ENCODE measurements at regions of chr18 and their contacts with region 1.

Region 1: DNA sequence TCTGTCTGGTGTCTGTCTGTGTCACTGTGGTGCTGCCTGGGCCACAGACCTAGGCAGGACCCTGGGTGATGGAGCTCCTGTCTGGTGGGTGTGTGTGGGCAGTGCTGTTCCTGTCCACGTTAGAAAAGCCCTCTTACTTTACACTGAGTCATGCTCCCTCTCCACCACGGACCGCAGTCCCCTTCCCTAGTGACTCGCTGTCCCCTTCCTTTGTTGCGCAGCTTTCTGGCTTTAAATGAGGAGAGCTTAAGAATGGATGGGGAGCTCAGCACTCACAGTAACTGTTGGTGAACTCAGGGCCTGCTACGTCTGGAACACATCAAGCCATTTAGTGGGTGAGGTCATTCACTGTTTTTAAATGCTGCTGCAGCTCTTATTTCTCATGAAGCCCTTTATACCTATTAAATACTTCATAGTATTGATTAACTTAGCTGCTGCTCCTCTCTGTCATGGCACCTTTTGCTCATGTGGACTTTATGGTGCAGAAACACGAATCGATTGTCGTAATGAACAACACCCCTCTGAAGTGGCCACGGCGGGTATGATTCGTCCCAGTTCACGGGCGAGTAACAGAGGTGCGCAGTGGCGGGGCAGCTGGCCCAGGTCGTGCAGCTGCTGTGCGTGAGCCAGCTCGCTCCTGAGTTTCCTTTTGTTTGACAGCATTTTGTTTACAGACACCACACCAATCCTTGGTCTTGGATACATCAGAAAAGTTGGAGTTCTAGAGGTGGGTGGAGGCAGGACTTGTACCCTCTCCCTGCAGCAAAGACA is 100.4 kb downstream of the LDLRAD4 start:
- DNase-seq: no peak
- H3K4me3 ChIP-seq: no peak overlapping the region
- H3K27ac ChIP-seq: no peak overlapping the region
- H3K4me1 ChIP-seq: no peaks in the 10 kb centered on the region
- H3K27me3 ChIP-seq: no peaks in the 10 kb centered on the region
- CTCF ChIP-seq: no peak
- POLR2A ChIP-seq: no peak

Region 2: GRCh38 chr18:13392029-13392750 is 73.3 kb after region 1 on chr18:
- intact Hi-C with region 1: loop called (anchors 2 kb)
- DNase-seq: no peak
- H3K4me3 ChIP-seq: no peak overlapping the region
- H3K27ac ChIP-seq: no peak overlapping the region
- H3K4me1 ChIP-seq: no peaks in the 10 kb centered on the region
- H3K27me3 ChIP-seq: no peaks in the 10 kb centered on the region
- CTCF ChIP-seq: no peak
- POLR2A ChIP-seq: no peak